Caco-2 (cell line): ENCODE measurements at regions of chr10 and their contacts with region 1.

Region 1: GRCh38 chr10:63547628-63548360 is 26.6 kb downstream of the REEP3 start:
- DNase-seq: no peak
- H3K4me3 ChIP-seq: no peak overlapping the region
- H3K4me3 Mint-ChIP-seq: no peak overlapping the region
- H3K27ac Mint-ChIP-seq: no peak overlapping the region
- H3K4me1 ChIP-seq: peaks cover 16% of the 10 kb centered on the region
- H3K4me1 Mint-ChIP-seq: peaks cover 12% of the 10 kb centered on the region
- H3K27me3 ChIP-seq: no peaks in the 10 kb centered on the region
- H3K27me3 Mint-ChIP-seq: no peaks in the 10 kb centered on the region
- CTCF ChIP-seq: no peak

Region 2: GRCh38 chr10:64219271-64220025 is 671.7 kb after region 1 on chr10:
- CTCF ChIA-PET with region 1: no interaction called
- POLR2A ChIA-PET with region 1: interaction called, 15 read pairs
- intact Hi-C with region 1: no loop called
- DNase-seq: no peak
- H3K4me3 ChIP-seq: no peak overlapping the region
- H3K4me3 Mint-ChIP-seq: no peak overlapping the region
- H3K27ac Mint-ChIP-seq: no peak overlapping the region
- H3K4me1 ChIP-seq: no peaks in the 10 kb centered on the region
- H3K4me1 Mint-ChIP-seq: no peaks in the 10 kb centered on the region
- H3K27me3 ChIP-seq: no peaks in the 10 kb centered on the region
- H3K27me3 Mint-ChIP-seq: no peaks in the 10 kb centered on the region
- CTCF ChIP-seq: no peak